Right lobe of liver (tissue), 6 donors: ENCODE measurements at regions of chr11 and their contacts with region 1.

Region 1: GRCh38 chr11:73184953-73185671 is 33.0 kb upstream of the P2RY2 start:
- DNase-seq: peak; percentile 72 to 78 (median 76)
- ATAC-seq: peak; percentile 90 to 94 (median 91)
- H3K4me3 ChIP-seq: no peak overlapping the region
- H3K27ac ChIP-seq: no peak overlapping the region
- H3K4me1 ChIP-seq: no peaks in the 10 kb centered on the region
- H3K27me3 ChIP-seq: no peaks in the 10 kb centered on the region
- CTCF ChIP-seq: peak; percentile 85 to 91 (median 88)
- POLR2A ChIP-seq: no peak

Region 2: GRCh38 chr11:73236854-73237253 is 51.7 kb after region 1 on chr11:
- intact Hi-C with region 1: loop called (anchors 2 to 5 kb)
- DNase-seq: peak in 2 of 3 donors; percentile 55 to 58
- ATAC-seq: peak; percentile 61 to 81 (median 72)
- H3K4me3 ChIP-seq: no peak overlapping the region
- H3K27ac ChIP-seq: no peak overlapping the region
- H3K4me1 ChIP-seq: peaks cover 0 to 34% (median 3%) of the 10 kb centered on the region in 4 donors
- H3K27me3 ChIP-seq: no peaks in the 10 kb centered on the region
- CTCF ChIP-seq: peak; percentile 36 to 63 (median 54)
- POLR2A ChIP-seq: no peak

Region 3: GRCh38 chr11:73242251-73243079 is 57.4 kb after region 1 on chr11:
- intact Hi-C with region 1: loop called (anchors 2 to 5 kb)
- DNase-seq: peak; percentile 74 to 77 (median 76)
- ATAC-seq: peak; percentile 92 to 96 (median 94)
- H3K4me3 ChIP-seq: no peak overlapping the region
- H3K27ac ChIP-seq: no peak overlapping the region
- H3K4me1 ChIP-seq: no peaks in the 10 kb centered on the region
- H3K27me3 ChIP-seq: no peaks in the 10 kb centered on the region
- CTCF ChIP-seq: peak; percentile 84 to 94 (median 85)
- POLR2A ChIP-seq: no peak

Region 4: GRCh38 chr11:73350908-73351636 is 166.0 kb after region 1 on chr11:
- intact Hi-C with region 1: no loop called
- DNase-seq: no peak
- ATAC-seq: peak; percentile 76 to 90 (median 88)
- H3K4me3 ChIP-seq: no peak overlapping the region
- H3K27ac ChIP-seq: no peak overlapping the region
- H3K4me1 ChIP-seq: no peaks in the 10 kb centered on the region
- H3K27me3 ChIP-seq: no peaks in the 10 kb centered on the region
- CTCF ChIP-seq: peak; percentile 89 to 99 (median 98)
- POLR2A ChIP-seq: no peak